Adrenal gland (tissue), 19 donors: ENCODE measurements at regions of chr7 and their contacts with region 1.

Region 1: GRCh38 chr7:27196287-27196767 is 3.6 kb downstream of the HOXA13 start:
- DNase-seq: peak; percentile 73 to 94 (median 81)
- H3K4me3 ChIP-seq: no peak overlapping the region
- H3K27ac ChIP-seq: no peak overlapping the region
- H3K4me1 ChIP-seq: peaks cover 9 to 23% of the 10 kb centered on the region in 2 donors
- H3K27me3 ChIP-seq: peaks cover 96% of the 10 kb centered on the region
- CTCF ChIP-seq: peak; percentile 56 to 83 (median 74)
- POLR2A ChIP-seq: no peak

Region 2: DNA sequence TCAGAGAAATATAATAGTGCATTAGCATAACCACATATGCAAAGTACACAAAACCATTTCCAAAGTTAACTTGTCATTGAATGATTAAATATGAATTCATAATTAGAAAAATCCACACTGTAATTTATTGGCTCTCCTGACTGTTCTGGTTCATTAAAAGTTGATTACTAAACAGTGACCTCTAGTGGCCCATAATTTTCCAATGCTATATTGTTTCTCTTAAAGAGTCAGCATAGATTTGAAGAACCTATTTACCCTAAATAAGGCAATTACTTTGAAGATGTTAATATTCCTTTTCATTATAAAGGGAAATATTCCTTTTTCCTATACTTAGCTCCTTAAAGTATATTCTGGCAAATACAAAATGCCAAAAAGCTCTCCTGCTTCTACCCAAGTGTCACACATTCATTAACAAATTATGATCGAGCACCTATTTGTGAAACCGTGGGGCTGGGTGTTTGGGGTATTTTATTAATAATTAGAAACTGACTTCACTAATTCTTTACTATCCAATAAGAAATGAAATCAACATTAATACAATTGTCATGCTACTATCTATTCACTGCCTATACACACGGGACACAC is 380.1 kb after region 1 on chr7:
- intact Hi-C with region 1: loop called in 1 of 2 experiments (anchors 10 kb)
- DNase-seq: no peak
- H3K4me3 ChIP-seq: no peak overlapping the region
- H3K27ac ChIP-seq: no peak overlapping the region
- H3K4me1 ChIP-seq: no peaks in the 10 kb centered on the region
- H3K27me3 ChIP-seq: no peaks in the 10 kb centered on the region
- CTCF ChIP-seq: peak; percentile 36 to 76 (median 60)
- POLR2A ChIP-seq: no peak

Region 3: DNA sequence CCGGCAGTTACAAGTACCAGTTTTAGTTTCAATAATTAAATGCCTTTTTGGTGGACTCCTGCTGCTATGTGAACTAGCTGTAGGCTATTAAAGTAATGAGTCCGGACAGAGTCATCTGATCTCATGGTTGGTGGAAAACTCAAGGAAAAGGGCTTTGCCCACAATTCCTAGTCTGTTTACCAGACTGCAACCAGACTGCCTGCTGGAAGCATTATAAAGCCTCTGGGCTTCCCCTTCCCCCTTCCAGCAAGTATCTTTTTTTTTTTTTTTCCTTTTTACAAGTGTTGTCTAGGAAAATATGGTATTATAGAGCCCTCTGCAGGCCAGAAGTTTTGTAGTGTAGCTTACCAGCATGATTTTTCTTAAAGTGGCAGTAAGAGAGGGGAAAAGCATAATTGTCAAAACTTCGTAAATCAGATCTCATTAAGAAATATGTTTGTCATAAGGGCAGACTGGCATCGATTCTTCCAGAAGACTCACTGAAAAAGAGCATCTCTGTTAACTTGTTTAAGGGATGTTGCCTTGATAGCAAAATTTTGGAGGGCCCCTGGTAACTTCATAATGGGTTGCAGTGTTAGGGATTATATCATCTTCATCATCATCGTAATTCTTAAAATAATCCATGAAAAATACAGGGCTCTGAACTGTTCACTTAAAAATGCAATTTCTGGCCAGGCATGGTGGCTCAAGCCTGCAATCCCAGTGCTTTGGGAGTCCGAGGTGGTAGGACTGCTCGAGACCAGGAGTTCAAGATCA is 724.9 kb after region 1 on chr7:
- intact Hi-C with region 1: loop called in 1 of 2 experiments (anchors 10 kb)
- DNase-seq: peak; percentile 53 to 73 (median 66)
- H3K4me3 ChIP-seq: no peak overlapping the region
- H3K27ac ChIP-seq: peak overlapping the region in 1 of 5 donors; percentile 11
- H3K4me1 ChIP-seq: peaks cover 0 to 6% of the 10 kb centered on the region in 2 donors
- H3K27me3 ChIP-seq: no peaks in the 10 kb centered on the region
- CTCF ChIP-seq: peak in 5 of 6 experiments; percentile 64 to 89 (median 67)
- POLR2A ChIP-seq: peak in 1 of 2 donors; percentile 58

Region 4: GRCh38 chr7:28017372-28017771 is 821.0 kb after region 1 on chr7:
- intact Hi-C with region 1: loop called (anchors 10 kb)
- DNase-seq: peak in 1 of 7 donors; percentile 38
- H3K4me3 ChIP-seq: no peak overlapping the region
- H3K27ac ChIP-seq: no peak overlapping the region
- H3K4me1 ChIP-seq: peaks cover 0 to 5% of the 10 kb centered on the region in 2 donors
- H3K27me3 ChIP-seq: no peaks in the 10 kb centered on the region
- CTCF ChIP-seq: no peak
- POLR2A ChIP-seq: no peak

Region 5: GRCh38 chr7:28096713-28097112 is 900.4 kb after region 1 on chr7:
- intact Hi-C with region 1: loop called in 1 of 2 experiments (anchors 10 kb)
- DNase-seq: peak; percentile 56 to 83 (median 64)
- H3K4me3 ChIP-seq: no peak overlapping the region
- H3K27ac ChIP-seq: peak overlapping the region in 3 of 5 donors; percentile 22 to 46 (median 26)
- H3K4me1 ChIP-seq: peaks cover 0 to 10% of the 10 kb centered on the region in 2 donors
- H3K27me3 ChIP-seq: no peaks in the 10 kb centered on the region
- CTCF ChIP-seq: peak; percentile 81 to 92 (median 87)
- POLR2A ChIP-seq: no peak